AG04450 (cell line): ENCODE measurements at regions of chr3 and their contacts with region 1.

Region 1: GRCh38 chr3:151838583-151839312 is 24.8 kb downstream of the AADAC start:
- DNase-seq: peak; percentile 65
- H3K4me3 ChIP-seq: no peak overlapping the region
- H3K27ac ChIP-seq: no peak overlapping the region
- H3K27me3 ChIP-seq: no peaks in the 10 kb centered on the region
- CTCF ChIP-seq: peak; percentile 81

Region 2: GRCh38 chr3:151168269-151169094 is 670.3 kb before region 1 on chr3:
- CTCF ChIA-PET with region 1: interaction called, 12 read pairs
- POLR2A ChIA-PET with region 1: no interaction called
- DNase-seq: peak; percentile 18
- H3K4me3 ChIP-seq: no peak overlapping the region
- H3K27ac ChIP-seq: no peak overlapping the region
- H3K27me3 ChIP-seq: no peaks in the 10 kb centered on the region
- CTCF ChIP-seq: peak; percentile 86

Region 3: DNA sequence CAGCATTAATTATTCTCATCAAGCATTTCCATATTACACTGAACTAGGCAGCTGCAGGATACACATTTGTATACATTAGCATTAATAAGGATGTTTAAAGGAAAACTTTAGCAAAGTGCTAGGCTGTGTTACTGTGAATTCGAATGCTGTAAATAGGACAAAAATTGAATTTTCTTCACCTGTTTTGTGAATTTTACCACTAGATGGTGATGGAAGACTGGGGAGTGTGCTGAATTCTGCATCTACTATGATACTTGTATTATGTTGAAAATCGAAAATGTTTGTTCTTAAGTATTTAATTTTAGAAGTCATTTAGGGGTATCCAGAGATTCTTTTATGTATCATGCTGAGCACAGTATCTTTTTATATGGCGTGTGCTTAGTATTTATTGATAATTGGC is 548.1 kb before region 1 on chr3:
- CTCF ChIA-PET with region 1: interaction called, 23 read pairs
- POLR2A ChIA-PET with region 1: no interaction called
- DNase-seq: no peak
- H3K4me3 ChIP-seq: no peak overlapping the region
- H3K27ac ChIP-seq: no peak overlapping the region
- H3K27me3 ChIP-seq: no peaks in the 10 kb centered on the region
- CTCF ChIP-seq: peak; percentile 64

Region 4: GRCh38 chr3:151439652-151440129 is 399.1 kb before region 1 on chr3:
- CTCF ChIA-PET with region 1: interaction called, 112 read pairs
- POLR2A ChIA-PET with region 1: no interaction called
- DNase-seq: peak; percentile 48
- H3K4me3 ChIP-seq: no peak overlapping the region
- H3K27ac ChIP-seq: no peak overlapping the region
- H3K27me3 ChIP-seq: no peaks in the 10 kb centered on the region
- CTCF ChIP-seq: peak; percentile 65

Region 5: GRCh38 chr3:151816091-151816604 is 22.6 kb before region 1 on chr3:
- CTCF ChIA-PET with region 1: interaction called, 11 read pairs
- POLR2A ChIA-PET with region 1: no interaction called
- DNase-seq: peak; percentile 27
- H3K4me3 ChIP-seq: no peak overlapping the region
- H3K27ac ChIP-seq: no peak overlapping the region
- H3K27me3 ChIP-seq: no peaks in the 10 kb centered on the region
- CTCF ChIP-seq: no peak

Region 6: GRCh38 chr3:151918253-151919029 is 79.7 kb after region 1 on chr3:
- CTCF ChIA-PET with region 1: interaction called, 10 read pairs
- POLR2A ChIA-PET with region 1: no interaction called
- DNase-seq: peak; percentile 29
- H3K4me3 ChIP-seq: no peak overlapping the region
- H3K27ac ChIP-seq: no peak overlapping the region
- H3K27me3 ChIP-seq: no peaks in the 10 kb centered on the region
- CTCF ChIP-seq: peak; percentile 67